ENCODE measurements at regions of chr5 and their contacts with region 1.

Region 1: DNA sequence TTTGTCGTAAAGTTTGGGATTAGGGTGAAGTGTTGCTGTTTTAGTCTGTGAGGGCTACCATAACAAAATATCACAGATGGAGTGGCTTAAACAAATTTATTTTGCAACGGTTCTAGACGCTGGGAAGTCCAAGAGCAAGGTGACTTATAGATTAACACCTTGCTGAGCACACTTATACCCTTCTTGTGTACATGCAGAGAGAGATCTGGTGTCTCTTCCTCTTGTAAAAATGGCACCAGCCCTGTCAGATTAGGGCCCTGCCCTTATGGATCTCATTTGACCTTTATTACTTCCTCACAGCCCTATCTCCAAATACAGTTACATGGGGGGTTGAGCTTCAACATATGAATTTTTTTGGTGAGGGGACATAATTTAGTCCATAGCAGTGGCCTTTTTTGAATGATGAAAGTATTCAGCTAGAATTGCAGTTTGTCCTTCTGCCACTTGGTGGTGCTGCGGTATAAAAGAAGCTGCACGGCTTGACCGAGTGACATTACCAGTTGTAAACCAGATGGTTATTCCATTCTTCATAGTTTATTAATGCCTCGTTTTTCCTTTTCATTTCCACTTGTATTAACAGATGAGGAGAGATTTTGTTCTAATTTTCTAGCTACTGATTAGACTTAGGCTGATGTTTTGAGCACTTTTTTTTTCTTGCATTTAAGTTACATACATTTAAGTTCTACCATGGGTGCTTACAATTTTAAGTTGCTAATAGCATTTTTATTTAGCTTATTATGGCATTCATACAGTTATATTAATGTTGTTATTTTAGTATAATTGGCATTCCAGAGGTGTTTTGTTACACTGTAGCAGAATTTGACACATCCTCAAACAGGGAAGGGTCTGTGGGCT is 19.4 kb downstream of the DCP2 start:
- DNase-seq: peak; percentile 78
- H3K4me3 ChIP-seq: no peak overlapping the region
- H3K27ac ChIP-seq: no peak overlapping the region
- H3K4me1 ChIP-seq: no peaks in the 10 kb centered on the region
- H3K27me3 ChIP-seq: no peaks in the 10 kb centered on the region
- CTCF ChIP-seq: peak; percentile 72 to 76
- POLR2A ChIP-seq: no peak

Region 2: DNA sequence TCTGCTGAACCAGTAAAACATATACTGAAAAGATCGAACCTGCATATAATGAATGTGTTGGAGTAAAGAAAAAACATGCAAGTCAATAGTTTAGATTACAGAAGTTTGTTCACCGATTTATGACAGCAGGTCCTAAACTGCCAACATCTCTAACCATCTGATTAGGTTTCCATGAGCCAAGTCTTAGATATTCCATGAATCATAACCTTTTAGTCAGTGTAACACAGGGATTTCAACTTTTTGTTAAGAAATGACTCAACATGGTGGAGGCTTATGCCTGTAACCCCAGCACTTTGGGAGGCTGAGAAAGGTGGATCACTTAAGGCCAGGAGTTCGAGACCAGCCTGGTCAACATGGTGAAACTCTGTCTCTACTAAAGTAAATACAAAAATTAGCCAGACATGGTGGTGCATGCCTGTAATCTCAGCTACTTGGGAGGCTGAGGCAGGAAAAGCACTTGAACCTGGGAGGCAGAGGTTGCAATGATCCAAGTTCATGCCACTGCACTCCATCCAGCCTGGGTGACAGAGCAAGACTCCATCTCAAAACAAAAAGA is 219.6 kb before region 1 on chr5:
- CTCF ChIA-PET with region 1: no interaction called
- POLR2A ChIA-PET with region 1: no interaction called
- dilution Hi-C with region 1: no loop called
- intact Hi-C with region 1: no loop called
- DNase-seq: no peak
- H3K4me3 ChIP-seq: no peak overlapping the region
- H3K27ac ChIP-seq: no peak overlapping the region
- H3K4me1 ChIP-seq: no peaks in the 10 kb centered on the region
- H3K27me3 ChIP-seq: no peaks in the 10 kb centered on the region
- CTCF ChIP-seq: no peak
- POLR2A ChIP-seq: no peak

Region 3: GRCh38 chr5:112951124-112951702 is 44.8 kb before region 1 on chr5:
- CTCF ChIA-PET with region 1: no interaction called
- POLR2A ChIA-PET with region 1: no interaction called
- dilution Hi-C with region 1: no loop called
- intact Hi-C with region 1: no loop called
- DNase-seq: no peak
- H3K4me3 ChIP-seq: no peak overlapping the region
- H3K27ac ChIP-seq: no peak overlapping the region
- H3K4me1 ChIP-seq: no peaks in the 10 kb centered on the region
- H3K27me3 ChIP-seq: no peaks in the 10 kb centered on the region
- CTCF ChIP-seq: no peak
- POLR2A ChIP-seq: no peak

Region 4: DNA sequence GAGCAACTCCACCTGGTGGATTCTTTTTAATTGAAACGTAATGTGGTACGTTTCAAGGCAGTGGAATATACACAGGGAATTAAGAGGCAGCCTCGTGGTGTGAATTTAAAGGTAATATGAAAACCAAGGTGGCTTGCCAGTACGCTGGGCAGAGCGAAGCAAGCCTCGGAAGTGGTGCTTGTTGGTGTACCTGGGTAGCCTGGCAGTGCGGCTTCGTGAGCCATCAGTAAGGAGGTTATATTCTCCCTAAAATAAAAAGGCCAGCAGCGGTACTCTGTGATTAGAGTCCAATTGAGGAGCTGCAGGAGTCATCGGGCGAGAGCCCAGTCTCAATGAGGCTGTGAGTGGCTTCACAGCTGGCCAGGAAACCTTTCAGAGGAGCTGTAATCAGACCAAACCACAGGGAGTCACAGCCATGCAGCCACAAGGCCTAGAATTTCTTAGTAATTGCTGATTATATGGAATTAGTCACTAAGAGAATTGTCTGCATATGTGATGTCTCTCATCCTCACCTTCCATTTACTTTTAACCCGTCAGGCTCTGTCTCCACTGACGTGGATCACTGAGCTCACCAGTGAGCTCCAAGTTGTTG is 38.3 kb after region 1 on chr5:
- CTCF ChIA-PET with region 1: interaction called, 46 read pairs
- POLR2A ChIA-PET with region 1: no interaction called
- dilution Hi-C with region 1: no loop called
- intact Hi-C with region 1: loop called (anchors 2 kb)
- DNase-seq: no peak
- H3K4me3 ChIP-seq: no peak overlapping the region
- H3K27ac ChIP-seq: no peak overlapping the region
- H3K4me1 ChIP-seq: no peaks in the 10 kb centered on the region
- H3K27me3 ChIP-seq: no peaks in the 10 kb centered on the region
- CTCF ChIP-seq: no peak
- POLR2A ChIP-seq: no peak

Region 5: GRCh38 chr5:113081881-113082546 is 86.0 kb after region 1 on chr5:
- CTCF ChIA-PET with region 1: interaction called, 4 read pairs
- POLR2A ChIA-PET with region 1: no interaction called
- dilution Hi-C with region 1: no loop called
- intact Hi-C with region 1: loop called (anchors 5 kb)
- DNase-seq: peak; percentile 94
- H3K4me3 ChIP-seq: no peak overlapping the region
- H3K27ac ChIP-seq: peak overlapping the region; percentile 69
- H3K4me1 ChIP-seq: peaks cover 19% of the 10 kb centered on the region
- H3K27me3 ChIP-seq: no peaks in the 10 kb centered on the region
- CTCF ChIP-seq: no peak
- POLR2A ChIP-seq: no peak

Region 6: GRCh38 chr5:113294311-113295110 is 298.5 kb after region 1 on chr5:
- CTCF ChIA-PET with region 1: interaction called, 16 read pairs
- POLR2A ChIA-PET with region 1: no interaction called
- dilution Hi-C with region 1: no loop called
- intact Hi-C with region 1: no loop called
- DNase-seq: peak; percentile 92
- H3K4me3 ChIP-seq: peak overlapping the region; percentile 52 to 86 (median 54)
- H3K27ac ChIP-seq: peak overlapping the region; percentile 65
- H3K4me1 ChIP-seq: peaks cover 31% of the 10 kb centered on the region
- H3K27me3 ChIP-seq: no peaks in the 10 kb centered on the region
- CTCF ChIP-seq: peak in 1 of 2 donors; percentile 24
- POLR2A ChIP-seq: peak; percentile 77

Region 7: DNA sequence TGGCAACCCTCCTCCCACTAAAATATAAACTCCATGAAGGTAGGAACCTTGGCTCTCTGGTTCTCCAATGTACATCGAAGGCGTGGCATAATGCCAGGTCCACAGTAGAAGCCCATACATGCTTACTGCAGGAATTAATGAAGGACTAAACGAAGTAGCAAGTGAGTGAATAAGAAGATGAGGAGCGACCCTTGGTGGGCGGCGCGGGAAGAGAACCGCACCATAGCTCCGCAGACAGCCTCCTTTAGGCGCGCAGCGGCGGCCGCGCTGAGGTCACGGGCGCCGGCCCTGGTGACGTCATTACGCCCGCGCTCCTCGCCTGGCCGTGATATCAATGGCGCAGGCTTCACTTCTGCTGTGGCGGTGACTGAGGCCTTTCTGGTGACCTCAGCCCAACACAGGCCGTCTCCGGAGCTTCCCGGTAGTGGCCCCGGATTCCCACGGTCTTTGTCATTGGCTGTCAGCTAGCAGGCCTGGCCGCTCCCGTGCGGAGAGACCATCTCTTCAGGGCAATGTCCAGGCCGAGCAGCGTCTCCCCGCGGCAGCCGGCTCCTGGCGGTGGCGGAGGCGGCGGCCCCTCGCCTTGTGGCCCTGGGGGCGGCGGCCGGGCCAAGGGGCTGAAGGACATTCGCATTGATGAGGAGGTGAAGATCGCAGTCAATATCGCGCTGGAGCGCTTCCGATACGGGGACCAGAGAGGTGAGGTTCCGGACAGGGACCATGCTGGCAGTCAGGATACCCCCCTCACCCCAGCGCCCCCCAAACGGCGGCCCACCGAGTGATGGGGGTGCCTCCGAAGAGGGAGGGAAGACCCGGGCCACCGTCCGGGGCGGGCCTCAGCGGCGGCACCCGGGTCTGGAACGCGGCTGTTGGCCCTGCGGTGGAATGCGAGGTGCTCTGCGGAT is 517.6 kb after region 1 on chr5 and contains the start of gene YTHDC2:
- CTCF ChIA-PET with region 1: interaction called, 76 read pairs
- POLR2A ChIA-PET with region 1: no interaction called
- dilution Hi-C with region 1: no loop called
- intact Hi-C with region 1: loop called (anchors 1 kb)
- DNase-seq: peak; percentile 90
- H3K4me3 ChIP-seq: peak within 1 kb of the TSS; percentile 72 to 91 (median 87)
- H3K27ac ChIP-seq: peak within 1 kb of the TSS; percentile 70
- H3K4me1 ChIP-seq: peaks cover 15% of the 10 kb centered on the region
- H3K27me3 ChIP-seq: peaks cover 2 to 12% of the 10 kb centered on the region in 2 experiments
- CTCF ChIP-seq: peak; percentile 9 to 34
- POLR2A ChIP-seq: peak; percentile 92
- total RNA-seq, gene YTHDC2: 33.2 and 40.7 TPM in 2 replicates